Activated CD4-positive, alpha-beta T cell treated with anti-CD3 and anti-CD28 coated beads for 36 hours (primary cell): ENCODE measurements at regions of chr6 and their contacts with region 1.

Region 1: DNA sequence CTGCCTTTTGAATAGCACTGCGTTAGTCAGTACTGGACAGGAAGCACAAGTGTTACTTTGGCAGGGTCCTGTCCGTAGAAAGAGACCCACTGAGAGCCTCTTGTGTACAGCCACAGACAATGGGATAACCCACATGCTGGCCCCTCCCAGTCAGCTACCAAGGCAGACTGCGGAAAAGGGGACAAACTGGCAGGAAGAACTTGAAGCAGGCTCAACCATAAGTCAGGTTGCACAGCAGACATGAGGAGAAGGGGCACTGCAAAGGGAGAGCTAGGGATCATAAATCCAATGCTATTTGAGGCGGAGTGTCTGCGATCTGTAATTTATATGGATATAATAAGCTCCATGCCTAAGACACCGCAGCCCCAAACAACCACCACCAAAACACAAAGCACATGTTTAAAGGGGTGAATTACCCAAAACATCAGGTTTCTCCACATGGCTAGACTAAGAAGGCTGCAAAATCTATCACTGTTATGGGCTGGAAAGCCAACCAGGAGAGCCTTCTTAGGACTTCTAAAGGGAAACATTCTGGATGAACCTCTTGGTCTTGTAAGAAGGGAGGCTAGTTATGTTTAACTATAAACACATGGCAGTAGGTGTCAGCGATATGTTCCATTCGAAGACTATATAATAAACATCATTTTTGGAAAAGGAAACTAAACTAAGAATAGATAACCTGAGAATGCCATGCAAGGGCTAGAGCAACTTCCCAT is 141.7 kb downstream of the BACH2 start:
- DNase-seq: no peak
- ATAC-seq: no peak
- H3K4me3 Mint-ChIP-seq: no peak overlapping the region
- H3K27ac Mint-ChIP-seq: peak overlapping the region; percentile 76
- H3K4me1 Mint-ChIP-seq: peaks cover 89% of the 10 kb centered on the region
- H3K27me3 Mint-ChIP-seq: no peaks in the 10 kb centered on the region

Region 2: GRCh38 chr6:88982720-88983119 is 1172.2 kb before region 1 on chr6:
- CTCF ChIA-PET with region 1: no interaction called
- POLR2A ChIA-PET with region 1: no interaction called
- intact Hi-C with region 1: no loop called
- DNase-seq: peak; percentile 45
- ATAC-seq: peak; percentile 96
- H3K4me3 Mint-ChIP-seq: no peak overlapping the region
- H3K27ac Mint-ChIP-seq: no peak overlapping the region
- H3K4me1 Mint-ChIP-seq: no peaks in the 10 kb centered on the region
- H3K27me3 Mint-ChIP-seq: peaks cover 3% of the 10 kb centered on the region

Region 3: GRCh38 chr6:89638320-89639195 is 516.4 kb before region 1 on chr6 and contains the start of gene LYRM2:
- CTCF ChIA-PET with region 1: no interaction called
- POLR2A ChIA-PET with region 1: no interaction called
- intact Hi-C with region 1: no loop called
- DNase-seq: peak; percentile 96
- ATAC-seq: peak; percentile 97
- H3K4me3 Mint-ChIP-seq: peak within 1 kb of the TSS; percentile 86
- H3K27ac Mint-ChIP-seq: peak within 1 kb of the TSS; percentile 98
- H3K4me1 Mint-ChIP-seq: peaks cover 22% of the 10 kb centered on the region
- H3K27me3 Mint-ChIP-seq: no peaks in the 10 kb centered on the region
- total RNA-seq, gene LYRM2: 24.5 to 27.9 TPM

Region 4: DNA sequence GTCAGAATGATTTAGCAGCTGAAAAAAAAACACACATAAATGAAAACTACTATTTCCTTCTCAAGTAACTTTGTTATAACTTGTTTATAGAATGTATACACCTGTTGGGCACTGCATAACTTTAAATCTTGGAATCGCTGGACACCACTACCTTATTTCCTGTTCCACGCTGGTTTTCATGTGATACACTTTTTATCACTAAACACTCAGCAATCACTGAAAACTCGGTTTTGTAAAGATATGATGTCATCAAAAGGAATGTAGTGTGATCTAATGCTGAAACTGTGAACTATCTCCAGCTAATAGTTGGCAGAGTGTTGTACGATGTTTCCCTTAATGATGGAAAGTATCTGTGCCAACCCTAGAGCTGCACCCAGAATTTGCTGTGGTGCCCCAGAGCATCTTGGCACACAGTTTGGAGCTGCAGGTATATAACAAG is 13.8 kb after region 1 on chr6:
- CTCF ChIA-PET with region 1: interaction called, 9 read pairs
- POLR2A ChIA-PET with region 1: no interaction called
- intact Hi-C with region 1: loop called in 1 of 2 experiments (anchors 2 kb)
- DNase-seq: no peak
- ATAC-seq: peak; percentile 51
- H3K4me3 Mint-ChIP-seq: no peak overlapping the region
- H3K27ac Mint-ChIP-seq: peak overlapping the region; percentile 68
- H3K4me1 Mint-ChIP-seq: peaks cover 61% of the 10 kb centered on the region
- H3K27me3 Mint-ChIP-seq: no peaks in the 10 kb centered on the region

Region 5: DNA sequence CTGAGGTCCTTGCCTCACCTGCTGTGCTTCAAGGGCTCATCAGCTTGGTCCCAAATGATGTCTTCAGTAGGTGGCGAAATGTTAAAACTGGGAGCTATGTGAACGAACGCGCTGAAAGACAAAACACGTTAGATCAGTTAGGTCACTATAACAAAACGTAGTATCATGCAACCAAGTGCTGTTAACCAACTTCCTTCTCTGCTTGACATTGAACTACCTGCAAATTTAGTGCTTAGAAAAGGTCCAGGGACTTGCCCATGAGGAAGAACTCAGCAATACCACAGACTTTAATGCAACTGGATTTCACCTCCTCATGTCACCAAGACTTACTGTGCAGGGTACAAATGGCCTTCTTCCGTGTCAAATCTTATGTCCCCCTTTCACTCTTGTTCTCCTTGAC is 116.9 kb after region 1 on chr6:
- CTCF ChIA-PET with region 1: no interaction called
- POLR2A ChIA-PET with region 1: no interaction called
- intact Hi-C with region 1: no loop called
- DNase-seq: no peak
- ATAC-seq: peak; percentile 1
- H3K4me3 Mint-ChIP-seq: peak overlapping the region; percentile 69
- H3K27ac Mint-ChIP-seq: peak overlapping the region; percentile 90
- H3K4me1 Mint-ChIP-seq: peaks cover 90% of the 10 kb centered on the region
- H3K27me3 Mint-ChIP-seq: no peaks in the 10 kb centered on the region